ENCODE measurements at regions of chr17 and their contacts with region 1.

Region 1: DNA sequence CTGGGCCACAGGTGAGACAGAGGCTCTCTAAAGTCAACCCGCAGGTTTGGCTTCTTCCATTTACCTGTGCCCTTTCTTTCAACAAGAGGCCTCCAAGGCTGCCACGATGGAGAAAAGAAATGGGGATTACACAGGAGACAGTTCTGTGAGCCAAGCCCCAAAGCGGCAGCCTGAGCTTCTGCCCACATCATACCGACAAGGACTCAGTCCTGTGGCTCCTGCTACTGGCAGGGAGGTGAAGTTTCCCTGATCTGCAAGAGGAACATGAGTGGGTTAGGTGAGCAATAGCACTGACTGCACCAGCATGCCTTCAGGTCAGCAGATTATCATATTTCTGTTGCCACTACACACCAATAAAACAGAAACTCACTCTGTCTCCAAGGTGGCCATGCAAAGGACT is 800.0 kb downstream of the KCNJ18 start:
- DNase-seq: no peak
- H3K4me3 ChIP-seq: no peak overlapping the region
- H3K27ac ChIP-seq: no peak overlapping the region
- H3K4me1 ChIP-seq: no peaks in the 10 kb centered on the region
- H3K27me3 ChIP-seq: no peaks in the 10 kb centered on the region
- CTCF ChIP-seq: no peak
- POLR2A ChIP-seq: no peak

Region 2: GRCh38 chr17:22138861-22139469 is 353.4 kb before region 1 on chr17:
- intact Hi-C with region 1: no loop called
- DNase-seq: no peak
- H3K4me3 ChIP-seq: no peak overlapping the region
- H3K27ac ChIP-seq: no peak overlapping the region
- H3K4me1 ChIP-seq: no peaks in the 10 kb centered on the region
- H3K27me3 ChIP-seq: no peaks in the 10 kb centered on the region
- CTCF ChIP-seq: no peak
- POLR2A ChIP-seq: no peak

Region 3: DNA sequence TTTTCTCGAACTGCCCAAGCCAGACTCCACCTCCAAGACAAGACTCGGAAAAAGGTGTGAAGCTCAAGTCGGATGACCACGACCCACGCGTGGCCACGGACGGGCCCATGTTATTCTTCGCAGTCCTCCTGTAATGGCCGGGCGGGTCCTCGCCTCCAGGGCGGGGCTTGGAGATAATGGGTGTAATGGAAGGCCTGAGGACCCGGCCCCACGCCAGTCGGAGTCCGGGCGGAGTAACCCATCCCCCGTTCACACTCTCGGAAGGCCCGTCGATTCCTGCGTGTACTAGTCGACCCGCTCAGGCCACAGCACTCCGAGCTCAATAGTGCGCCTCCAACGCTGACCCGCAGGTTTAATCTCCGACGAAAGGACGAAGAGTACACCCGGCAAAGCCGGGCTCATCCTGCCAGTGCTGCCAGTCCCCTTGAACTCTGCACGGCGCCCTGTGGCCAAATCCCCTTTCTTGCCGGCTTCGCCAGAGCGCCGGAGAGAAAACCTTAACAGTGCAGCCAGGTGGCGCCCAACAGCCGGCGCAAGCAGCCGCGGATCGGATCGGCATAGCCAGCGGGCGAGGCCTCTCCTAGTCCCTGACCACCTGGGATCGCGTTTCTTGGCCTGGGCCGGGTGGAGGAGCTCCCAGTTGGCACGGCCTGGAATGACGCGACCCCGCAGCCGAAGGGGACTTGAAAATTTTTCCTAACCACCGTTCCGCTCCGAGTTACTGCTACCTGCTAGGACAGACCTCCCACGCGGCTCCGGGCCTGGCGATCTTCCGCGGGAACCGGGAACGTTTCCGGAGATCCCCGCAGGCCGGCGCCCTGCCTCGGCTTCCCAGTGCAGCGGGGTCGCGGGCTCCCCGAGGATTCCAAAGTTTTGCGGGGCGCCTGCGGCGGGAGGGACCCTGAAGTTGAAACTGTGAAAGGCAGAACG is 38.0 kb before region 1 on chr17:
- intact Hi-C with region 1: no loop called
- DNase-seq: no peak
- H3K4me3 ChIP-seq: no peak overlapping the region
- H3K27ac ChIP-seq: no peak overlapping the region
- H3K4me1 ChIP-seq: no peaks in the 10 kb centered on the region
- H3K27me3 ChIP-seq: no peaks in the 10 kb centered on the region
- CTCF ChIP-seq: no peak
- POLR2A ChIP-seq: no peak

Region 4: DNA sequence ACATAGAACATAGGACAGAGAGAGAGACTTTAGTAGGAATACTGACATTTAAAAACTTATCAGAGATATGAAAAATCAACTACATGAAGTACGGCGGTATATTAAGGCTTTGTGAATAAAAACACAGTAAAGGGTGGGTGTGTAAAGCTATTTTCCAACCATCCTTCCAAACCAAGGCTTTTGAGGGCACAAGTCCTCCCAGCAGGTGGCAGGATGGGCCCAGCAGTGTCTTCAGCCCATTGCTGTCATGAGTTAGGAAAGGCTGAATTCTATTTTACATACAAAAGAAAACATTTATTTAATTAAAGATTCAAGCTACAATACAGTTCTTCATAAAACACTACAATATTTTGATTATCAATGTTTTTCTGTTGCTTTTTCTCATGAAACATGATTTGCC is 41.4 kb after region 1 on chr17:
- intact Hi-C with region 1: loop called (anchors 5 kb)
- DNase-seq: no peak
- H3K4me3 ChIP-seq: no peak overlapping the region
- H3K27ac ChIP-seq: no peak overlapping the region
- H3K4me1 ChIP-seq: no peaks in the 10 kb centered on the region
- H3K27me3 ChIP-seq: no peaks in the 10 kb centered on the region
- CTCF ChIP-seq: no peak
- POLR2A ChIP-seq: no peak

Region 5: GRCh38 chr17:22644264-22644663 is 151.9 kb after region 1 on chr17:
- intact Hi-C with region 1: no loop called
- DNase-seq: no peak
- H3K4me3 ChIP-seq: no peak overlapping the region
- H3K27ac ChIP-seq: no peak overlapping the region
- H3K4me1 ChIP-seq: no peaks in the 10 kb centered on the region
- H3K27me3 ChIP-seq: no peaks in the 10 kb centered on the region
- CTCF ChIP-seq: no peak
- POLR2A ChIP-seq: no peak